ENCODE measurements at regions of chr6 and their contacts with region 1.

Region 1: GRCh38 chr6:11607383-11607782 is 69.8 kb downstream of the TMEM170B start:
- DNase-seq: peak in 3 of 10 donors; percentile 20 to 53 (median 43)
- H3K4me3 ChIP-seq: peak overlapping the region in 3 of 59 donors; percentile 1 to 26 (median 14)
- H3K27ac ChIP-seq: peak overlapping the region in 47 of 59 donors; percentile 17 to 84 (median 59)
- H3K27me3 ChIP-seq: no peaks in the 10 kb centered on the region
- CTCF ChIP-seq: no peak

Region 2: GRCh38 chr6:11566609-11567008 is 40.8 kb before region 1 on chr6:
- intact Hi-C with region 1: no loop called
- DNase-seq: no peak
- H3K4me3 ChIP-seq: no peak overlapping the region
- H3K27ac ChIP-seq: no peak overlapping the region
- H3K27me3 ChIP-seq: no peaks in the 10 kb centered on the region
- CTCF ChIP-seq: no peak

Region 3: DNA sequence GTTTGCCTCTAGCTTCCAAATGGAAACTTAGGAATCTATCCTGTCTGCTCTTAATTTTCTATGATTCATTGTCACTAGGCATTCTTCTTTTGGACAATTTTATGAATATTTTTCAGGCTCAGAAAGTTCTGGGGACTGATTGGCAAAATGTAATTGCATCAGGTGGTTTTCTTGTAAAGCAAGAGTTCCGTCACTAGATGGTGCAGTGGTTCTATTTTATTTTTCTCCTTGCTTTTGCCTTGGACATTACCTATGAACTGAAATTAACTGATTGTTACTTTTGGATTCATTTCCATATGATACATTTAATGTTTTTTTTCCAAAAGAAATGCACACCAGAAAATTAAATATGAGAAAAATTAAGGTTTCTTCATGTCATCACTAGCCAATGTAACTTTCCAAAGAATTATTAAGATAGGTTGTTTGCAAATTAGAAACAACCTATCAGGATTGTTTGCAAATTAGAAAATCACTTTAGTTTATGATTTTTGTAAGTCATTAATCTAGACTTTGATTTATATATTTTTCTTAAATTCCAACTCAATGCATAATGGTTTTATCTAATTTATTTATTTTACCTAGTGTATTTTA is 21.9 kb before region 1 on chr6:
- intact Hi-C with region 1: loop called in 1 of 2 experiments (anchors 2 kb)
- DNase-seq: no peak
- H3K4me3 ChIP-seq: no peak overlapping the region
- H3K27ac ChIP-seq: no peak overlapping the region
- H3K27me3 ChIP-seq: no peaks in the 10 kb centered on the region
- CTCF ChIP-seq: peak; percentile 49 to 85 (median 68)

Region 4: DNA sequence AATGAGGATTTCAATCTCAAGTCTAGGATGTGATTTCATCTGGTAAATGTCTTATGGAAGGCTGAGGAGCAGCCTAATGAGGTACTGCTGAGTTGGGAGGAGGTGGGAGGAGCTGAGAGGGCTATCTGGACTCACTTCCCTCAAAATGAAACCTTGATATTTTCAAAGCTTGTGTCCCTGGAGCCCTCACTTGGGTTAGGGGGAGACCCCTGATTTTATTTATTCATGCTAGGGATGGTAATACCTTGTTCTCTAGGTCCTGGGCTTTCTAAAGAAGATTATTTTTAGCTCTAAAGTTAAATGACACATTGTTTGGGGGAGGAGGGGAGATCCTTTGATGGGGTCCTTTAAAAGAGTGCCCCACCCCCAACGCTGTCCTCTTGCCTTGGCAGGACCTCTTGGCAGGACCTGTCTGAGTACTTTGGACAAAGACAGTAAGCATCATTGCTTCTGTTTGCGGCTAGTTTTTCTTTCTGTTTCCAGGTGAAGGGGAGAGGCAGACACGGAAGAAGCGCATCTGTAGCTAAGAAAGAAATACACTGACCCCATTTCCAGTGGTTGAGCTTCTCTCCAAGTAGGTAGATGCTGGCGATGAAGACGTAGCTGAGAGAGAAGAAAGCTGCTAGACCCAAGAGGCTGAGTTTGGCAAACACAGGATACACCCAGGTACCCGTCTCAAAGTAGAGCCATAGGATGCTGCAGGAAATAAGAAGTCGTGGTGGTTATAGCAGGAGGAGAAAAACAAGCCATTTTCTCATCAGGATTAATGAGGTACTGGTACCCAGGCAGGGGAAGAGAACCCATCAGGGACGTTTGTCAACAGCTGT is 115.6 kb after region 1 on chr6:
- intact Hi-C with region 1: no loop called
- DNase-seq: no peak
- H3K4me3 ChIP-seq: no peak overlapping the region
- H3K27ac ChIP-seq: peak overlapping the region in 33 of 59 donors; percentile 9 to 69 (median 45)
- H3K27me3 ChIP-seq: no peaks in the 10 kb centered on the region
- CTCF ChIP-seq: no peak

Region 5: DNA sequence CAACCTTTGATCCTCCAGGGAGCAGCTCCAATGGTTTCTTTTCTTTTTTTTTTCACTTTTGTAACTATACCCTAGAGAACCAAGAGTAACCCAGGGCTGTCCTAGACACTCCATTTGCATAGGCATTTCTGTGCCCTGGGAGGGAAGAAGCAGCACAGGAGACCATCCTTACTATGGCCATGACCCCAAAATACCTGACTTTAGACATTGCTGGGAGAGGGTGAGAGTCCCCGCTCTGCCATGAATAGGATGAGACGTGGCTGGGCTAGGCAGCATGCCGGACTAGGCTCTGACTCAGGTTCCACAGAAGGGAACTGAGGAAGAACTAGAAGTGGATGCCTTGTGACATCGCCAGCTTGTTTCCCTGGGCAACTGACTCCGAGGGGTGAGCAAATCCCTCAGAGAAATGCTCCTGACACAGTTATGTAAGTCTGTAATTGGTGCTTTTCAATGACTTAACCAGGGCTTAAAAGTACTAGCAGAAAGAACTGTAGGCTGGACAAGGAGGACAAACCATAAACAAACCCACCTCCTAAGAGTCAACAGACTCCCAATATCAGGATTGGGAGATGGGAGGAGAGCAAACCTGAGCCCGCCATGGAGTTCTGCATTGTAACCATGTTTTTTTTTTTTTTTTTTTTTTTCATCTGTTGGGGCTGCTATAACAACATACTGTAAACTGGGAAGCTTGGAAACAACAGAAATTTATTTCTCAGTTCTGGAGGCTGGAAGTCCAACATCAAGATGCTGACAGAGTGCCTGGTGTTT is 172.1 kb after region 1 on chr6:
- intact Hi-C with region 1: loop called in 1 of 2 experiments (anchors 2 kb)
- DNase-seq: peak in 7 of 10 donors; percentile 45 to 82 (median 54)
- H3K4me3 ChIP-seq: no peak overlapping the region
- H3K27ac ChIP-seq: peak overlapping the region in 35 of 59 donors; percentile 1 to 75 (median 31)
- H3K27me3 ChIP-seq: no peaks in the 10 kb centered on the region
- CTCF ChIP-seq: no peak

Measured in dorsolateral prefrontal cortex (tissue), 120 donors.